HEK293 (cell line): ENCODE measurements at regions of chr2 and their contacts with region 1.

Region 1: DNA sequence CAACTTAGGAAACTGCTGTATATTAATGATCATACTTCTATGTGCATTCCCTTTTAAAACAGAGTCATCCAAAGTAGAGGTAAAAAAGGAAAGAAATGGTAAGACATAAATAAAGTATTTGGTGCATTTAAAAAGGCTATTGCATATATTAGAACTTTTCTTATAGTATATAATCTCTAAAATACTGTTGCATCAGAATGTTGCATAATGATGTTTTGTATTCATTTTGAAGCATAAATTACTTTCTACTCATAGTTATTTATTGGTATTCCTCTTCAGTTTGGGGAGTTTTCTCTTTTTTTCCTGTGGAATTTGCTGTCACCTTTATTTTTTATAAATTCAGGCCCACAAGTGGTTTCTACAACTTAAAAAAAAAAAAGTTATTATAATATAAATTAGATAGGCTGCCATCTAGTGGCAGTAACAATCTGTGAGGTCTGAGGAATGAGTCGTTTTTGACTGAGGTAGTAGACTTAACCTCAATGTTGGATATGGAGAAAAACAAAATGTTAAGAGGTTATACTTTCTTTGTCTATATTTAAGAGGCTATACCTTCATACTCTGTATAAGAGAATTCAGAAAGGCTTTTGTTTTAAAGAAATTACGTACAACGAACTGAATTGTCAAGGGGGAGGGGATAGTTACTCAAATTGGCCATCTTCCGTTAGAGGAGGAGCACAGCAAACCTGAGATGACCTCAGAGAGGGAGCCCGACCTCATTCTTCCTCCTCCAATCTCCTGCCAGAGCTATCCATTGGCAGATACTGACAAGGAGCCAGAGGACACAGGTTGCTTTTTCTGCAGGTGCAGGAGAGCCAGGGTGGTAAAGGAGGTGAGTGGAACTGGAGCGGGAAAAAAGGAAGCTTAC is 23.8 kb downstream of the ANKAR start:
- H3K4me3 ChIP-seq: no peak overlapping the region
- H3K27ac ChIP-seq: no peak overlapping the region
- H3K4me1 ChIP-seq: no peaks in the 10 kb centered on the region
- CTCF ChIP-seq: no peak

Region 2: GRCh38 chr2:189347540-189347939 is 350.7 kb before region 1 on chr2:
- CTCF ChIA-PET with region 1: no interaction called
- POLR2A ChIA-PET with region 1: no interaction called
- H3K4me3 ChIP-seq: no peak overlapping the region
- H3K27ac ChIP-seq: no peak overlapping the region
- H3K4me1 ChIP-seq: no peaks in the 10 kb centered on the region
- CTCF ChIP-seq: no peak

Region 3: DNA sequence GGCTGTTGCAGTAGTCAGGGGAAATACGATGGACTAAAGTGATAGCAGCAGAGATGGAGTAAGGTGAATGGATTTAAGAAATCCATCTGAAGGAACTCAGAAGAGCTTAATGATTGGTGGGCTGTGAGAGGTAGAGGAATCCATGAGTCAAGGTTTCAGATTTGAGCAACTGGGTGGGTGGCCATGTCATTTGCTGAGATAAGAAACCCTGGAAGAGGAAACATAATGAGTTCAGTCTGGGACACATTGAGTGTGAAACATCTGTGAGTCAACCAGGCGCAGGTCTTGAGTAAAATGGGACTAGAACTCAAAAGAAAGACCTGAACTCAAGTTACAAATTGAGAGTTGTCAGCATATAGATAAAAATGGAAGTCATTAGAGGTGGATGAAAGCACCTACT is 56.7 kb before region 1 on chr2:
- CTCF ChIA-PET with region 1: no interaction called
- POLR2A ChIA-PET with region 1: no interaction called
- H3K4me3 ChIP-seq: no peak overlapping the region
- H3K27ac ChIP-seq: no peak overlapping the region
- H3K4me1 ChIP-seq: peaks cover 25% of the 10 kb centered on the region
- CTCF ChIP-seq: no peak

Region 4: DNA sequence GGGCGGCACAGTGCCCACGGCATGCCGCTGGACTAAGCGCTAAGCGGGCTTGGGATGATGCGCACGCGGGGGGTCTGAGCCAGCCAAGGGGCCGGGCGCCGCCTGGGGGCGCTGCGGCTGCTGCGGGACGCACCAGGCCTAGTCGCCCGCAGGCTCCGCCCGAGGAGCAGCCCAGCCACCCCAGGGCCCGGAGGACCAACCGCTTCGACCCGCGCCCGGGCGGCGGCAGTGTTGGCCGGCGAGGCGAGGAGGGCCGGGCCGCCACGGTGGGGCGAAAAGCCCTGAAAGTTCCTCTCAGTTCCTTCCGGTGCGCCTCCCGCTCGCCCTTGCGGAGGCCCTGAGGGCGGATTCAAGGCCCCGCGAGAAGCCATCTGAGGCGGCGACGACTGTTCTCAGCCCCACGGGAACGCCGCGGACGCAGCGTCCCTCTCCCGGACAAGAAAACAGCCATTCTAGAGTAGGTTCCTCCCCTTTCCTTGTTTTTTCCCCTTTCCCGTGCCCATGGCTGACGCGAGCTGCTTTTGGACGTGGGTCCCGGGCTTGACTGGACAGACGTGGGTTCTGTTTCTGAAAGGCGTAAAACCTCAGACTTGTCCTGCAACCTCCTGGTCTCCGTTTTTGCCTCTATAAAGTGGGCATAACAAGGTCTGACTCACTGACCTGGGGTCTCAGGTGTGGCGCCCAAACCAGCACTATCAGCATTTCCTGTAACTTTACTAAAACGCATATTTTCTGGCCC is 23.7 kb before region 1 on chr2 and contains the start of gene ANKAR:
- CTCF ChIA-PET with region 1: interaction called, 11 read pairs
- POLR2A ChIA-PET with region 1: no interaction called
- H3K4me3 ChIP-seq: peak within 1 kb of the TSS; percentile 39
- H3K27ac ChIP-seq: peak within 1 kb of the TSS; percentile 80
- H3K4me1 ChIP-seq: no peaks in the 10 kb centered on the region; the same call in 1 of the 2 replicates
- CTCF ChIP-seq: no peak

Region 5: DNA sequence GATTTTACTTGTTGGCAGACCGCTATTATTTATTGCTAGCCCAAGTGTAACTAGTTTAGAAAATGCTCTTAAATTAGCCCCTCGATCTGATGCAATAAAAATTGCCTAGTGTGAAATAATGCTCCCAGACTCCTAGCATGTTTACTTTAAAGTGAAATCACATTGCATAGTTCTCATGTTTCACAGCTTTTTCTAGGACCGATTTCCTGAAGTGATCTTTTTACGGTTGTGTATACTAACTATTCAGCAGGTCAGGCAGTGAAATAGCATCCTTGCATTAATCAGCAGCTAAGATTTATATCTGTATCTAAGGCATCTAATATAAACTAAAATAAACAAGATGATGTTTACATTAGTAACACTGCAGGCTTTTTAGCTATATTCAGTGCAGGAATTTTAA is 138.4 kb after region 1 on chr2:
- CTCF ChIA-PET with region 1: no interaction called
- POLR2A ChIA-PET with region 1: no interaction called
- H3K4me3 ChIP-seq: no peak overlapping the region
- H3K27ac ChIP-seq: peak overlapping the region; percentile 35; the same call in 1 of the 2 replicates
- H3K4me1 ChIP-seq: peaks cover 7% of the 10 kb centered on the region; the same call in 1 of the 2 replicates
- CTCF ChIP-seq: no peak